Activated CD8-positive, alpha-beta memory T cell treated with anti-CD3 and anti-CD28 coated beads, Interleukin-2, amount 10 ng/mL, durations not matched to agents 7 days and 5 days (primary cell): ENCODE measurements at regions of chr19 and their contacts with region 1.

Region 1: DNA sequence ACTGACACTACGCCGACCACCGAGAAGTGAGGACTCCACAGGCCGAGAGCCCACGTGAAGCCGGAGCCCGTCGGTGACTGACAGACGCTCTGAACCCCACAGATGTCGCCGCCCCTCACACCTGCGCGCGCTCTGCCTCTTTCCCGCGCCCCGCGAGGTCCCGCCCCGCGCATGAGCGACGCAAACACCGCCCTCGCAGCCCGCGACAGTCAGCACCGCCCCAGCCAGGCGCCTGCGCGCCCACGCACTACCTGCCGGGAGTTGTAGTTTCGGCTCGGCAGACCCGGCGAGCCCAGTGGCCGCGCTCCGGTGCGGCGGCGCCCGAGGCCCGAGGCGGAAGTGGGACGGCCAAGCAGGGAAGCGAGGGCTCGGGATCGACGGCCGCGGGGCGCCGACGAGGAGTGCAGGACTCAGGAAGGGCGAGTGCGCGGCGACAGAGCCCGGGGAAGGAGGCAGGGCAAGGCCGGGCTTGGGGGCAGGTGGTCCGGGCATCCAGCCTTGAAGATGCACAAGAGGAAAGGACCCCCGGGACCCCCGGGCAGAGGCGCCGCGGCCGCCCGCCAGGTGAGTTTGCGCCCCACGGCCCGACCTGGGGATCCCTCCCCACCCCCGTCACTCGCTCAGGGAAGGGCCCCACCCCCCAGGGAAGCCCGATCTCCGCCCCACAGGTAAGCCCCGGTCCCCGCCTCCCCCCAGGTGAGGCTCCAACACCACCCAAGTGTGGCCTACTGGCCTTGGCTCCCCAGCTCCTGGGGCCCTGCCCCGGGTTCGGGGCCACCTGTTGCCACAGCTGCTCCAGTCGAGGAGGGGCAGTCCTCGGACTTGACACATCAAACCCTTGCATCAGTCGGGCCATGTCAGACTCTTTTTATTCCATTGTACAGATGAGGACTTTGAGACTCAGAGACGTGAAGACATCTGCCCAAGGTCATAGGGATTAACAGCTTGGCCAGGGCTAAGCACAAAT is at the starts of genes BRME1 and CC2D1A:
- DNase-seq: peak; percentile 96
- ATAC-seq: peak; percentile 99
- H3K4me3 Mint-ChIP-seq: peak within 1 kb of the TSS; percentile 80
- H3K27ac Mint-ChIP-seq: peak within 1 kb of the TSS; percentile 87
- H3K4me1 Mint-ChIP-seq: peaks cover 20% of the 10 kb centered on the region
- H3K27me3 Mint-ChIP-seq: no peaks in the 10 kb centered on the region
- total RNA-seq, gene BRME1: 4.1 to 4.4 TPM
- total RNA-seq, gene CC2D1A: 34.0 to 35.1 TPM

Region 2: DNA sequence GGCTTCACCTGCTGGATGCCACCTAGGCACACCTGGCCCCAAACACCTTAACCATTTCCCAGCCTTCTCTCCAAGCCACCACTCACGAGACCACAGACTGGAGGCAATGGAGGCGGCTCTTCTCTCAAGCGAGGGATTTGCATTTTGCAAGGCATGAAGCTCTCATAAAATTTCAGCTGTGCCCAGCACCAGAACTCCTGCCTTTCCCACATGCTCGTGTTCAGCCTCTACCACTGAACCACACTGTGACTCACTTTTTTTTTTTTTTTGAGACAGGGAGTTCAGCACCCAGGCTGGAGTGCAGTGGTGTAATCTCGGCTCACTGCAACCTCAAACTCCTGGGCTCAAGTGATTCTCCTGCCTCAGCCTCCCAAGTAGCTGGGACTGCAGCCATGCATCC is 18.7 kb before region 1 on chr19:
- CTCF ChIA-PET with region 1: interaction called, 18 read pairs
- DNase-seq: peak; percentile 48
- ATAC-seq: peak; percentile 43
- H3K4me3 Mint-ChIP-seq: peak overlapping the region; percentile 51
- H3K27ac Mint-ChIP-seq: peak overlapping the region; percentile 68
- H3K4me1 Mint-ChIP-seq: peaks cover 38% of the 10 kb centered on the region
- H3K27me3 Mint-ChIP-seq: peaks cover 9% of the 10 kb centered on the region

Region 3: DNA sequence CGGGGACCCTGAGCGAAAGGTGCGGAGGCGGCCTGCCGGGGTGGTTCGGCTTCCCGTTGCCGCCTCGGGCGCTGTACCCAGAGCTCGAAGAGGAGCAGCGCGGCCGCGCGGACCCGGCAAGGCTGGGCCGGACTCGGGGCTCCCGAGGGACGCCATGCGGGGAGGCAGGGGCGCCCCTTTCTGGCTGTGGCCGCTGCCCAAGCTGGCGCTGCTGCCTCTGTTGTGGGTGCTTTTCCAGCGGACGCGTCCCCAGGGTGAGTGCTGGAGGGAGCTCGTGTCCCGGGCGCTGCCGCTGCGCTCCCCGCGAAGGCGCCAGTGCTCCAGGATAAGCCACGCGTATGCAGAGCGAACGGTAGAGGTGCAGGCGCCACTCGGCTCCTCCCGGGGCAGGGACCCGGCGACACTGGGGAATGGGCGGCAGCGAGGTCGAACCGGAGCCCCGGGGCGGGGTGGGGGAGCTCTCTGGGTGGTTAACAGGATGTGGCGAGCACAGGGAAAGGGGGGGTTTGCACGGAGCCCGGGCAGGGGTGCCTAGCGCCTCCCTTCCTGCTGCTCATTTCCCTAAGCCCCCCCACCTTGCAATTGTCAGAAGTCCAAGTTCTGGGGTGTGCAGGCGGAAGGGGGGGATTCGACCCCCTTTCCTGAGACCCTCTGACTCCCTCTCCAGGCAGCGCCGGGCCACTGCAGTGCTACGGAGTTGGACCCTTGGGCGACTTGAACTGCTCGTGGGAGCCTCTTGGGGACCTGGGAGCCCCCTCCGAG is 125.7 kb after region 1 on chr19 and contains the start of gene IL27RA:
- CTCF ChIA-PET with region 1: interaction called, 12 read pairs
- DNase-seq: peak; percentile 88
- ATAC-seq: peak; percentile 85
- H3K4me3 Mint-ChIP-seq: peak within 1 kb of the TSS; percentile 90
- H3K27ac Mint-ChIP-seq: peak within 1 kb of the TSS; percentile 90
- H3K4me1 Mint-ChIP-seq: peaks cover 19% of the 10 kb centered on the region
- H3K27me3 Mint-ChIP-seq: peaks cover 6% of the 10 kb centered on the region
- total RNA-seq, gene IL27RA: 29.7 to 60.3 TPM

Region 4: GRCh38 chr19:14073261-14073924 is 167.2 kb after region 1 on chr19:
- CTCF ChIA-PET with region 1: interaction called, 17 read pairs
- DNase-seq: peak; percentile 82
- ATAC-seq: peak; percentile 79
- H3K4me3 Mint-ChIP-seq: peak overlapping the region; percentile 84
- H3K27ac Mint-ChIP-seq: peak overlapping the region; percentile 81
- H3K4me1 Mint-ChIP-seq: peaks cover 23% of the 10 kb centered on the region
- H3K27me3 Mint-ChIP-seq: peaks cover 3% of the 10 kb centered on the region